Posterior cingulate gyrus (tissue), 11 donors: ENCODE measurements at regions of chr18 and their contacts with region 1.

Region 1: DNA sequence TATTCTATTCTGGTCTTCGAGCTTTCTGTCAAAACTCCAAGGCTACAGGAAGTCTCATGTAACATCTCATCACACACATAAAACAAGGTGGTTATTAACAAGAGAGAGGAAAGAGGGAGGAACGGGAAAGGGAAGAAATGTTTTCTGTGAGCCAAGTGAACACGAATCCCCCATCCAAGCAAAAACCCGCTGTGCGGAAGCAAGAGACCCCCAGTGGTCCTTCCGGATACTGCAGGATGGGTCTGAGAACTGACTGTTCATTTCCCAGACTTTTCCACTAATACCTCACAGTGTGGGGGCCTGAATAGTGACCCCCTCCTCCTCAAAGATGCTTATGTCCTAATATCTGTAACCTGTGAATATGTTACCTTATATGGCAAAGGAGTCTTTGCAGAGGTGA is 19.0 kb upstream of the DIPK1C start:
- DNase-seq: peak in 7 of 10 donors; percentile 61 to 94 (median 78)

Region 2: GRCh38 chr18:74196220-74197119 is 279.7 kb before region 1 on chr18:
- intact Hi-C with region 1: loop called (anchors 2 kb)
- DNase-seq: peak in 2 of 10 donors; percentile 41 to 53

Region 3: GRCh38 chr18:74217476-74218143 is 258.5 kb before region 1 on chr18:
- intact Hi-C with region 1: no loop called
- DNase-seq: no peak

Region 4: GRCh38 chr18:74551936-74552555 is 75.9 kb after region 1 on chr18:
- intact Hi-C with region 1: loop called (anchors 5 kb)
- DNase-seq: peak; percentile 47 to 97 (median 86)

Region 5: GRCh38 chr18:74784752-74785151 is 308.6 kb after region 1 on chr18:
- intact Hi-C with region 1: no loop called
- DNase-seq: no peak